GM18951 (cell line): ENCODE measurements at regions of chr20 and their contacts with region 1.

Region 1: GRCh38 chr20:44217342-44218092 is 6.9 kb upstream of the OSER1 start:
- POLR2A ChIP-seq: no peak

Region 2: GRCh38 chr20:44310664-44311639 is 93.4 kb after region 1 on chr20 and contains the start of gene FITM2:
- in situ Hi-C with region 1: loop called (anchors 5 kb)
- POLR2A ChIP-seq: peak; percentile 68